Naive thymus-derived CD4-positive, alpha-beta T cell (primary cell): ENCODE measurements at regions of chr1 and their contacts with region 1.

Region 1: DNA sequence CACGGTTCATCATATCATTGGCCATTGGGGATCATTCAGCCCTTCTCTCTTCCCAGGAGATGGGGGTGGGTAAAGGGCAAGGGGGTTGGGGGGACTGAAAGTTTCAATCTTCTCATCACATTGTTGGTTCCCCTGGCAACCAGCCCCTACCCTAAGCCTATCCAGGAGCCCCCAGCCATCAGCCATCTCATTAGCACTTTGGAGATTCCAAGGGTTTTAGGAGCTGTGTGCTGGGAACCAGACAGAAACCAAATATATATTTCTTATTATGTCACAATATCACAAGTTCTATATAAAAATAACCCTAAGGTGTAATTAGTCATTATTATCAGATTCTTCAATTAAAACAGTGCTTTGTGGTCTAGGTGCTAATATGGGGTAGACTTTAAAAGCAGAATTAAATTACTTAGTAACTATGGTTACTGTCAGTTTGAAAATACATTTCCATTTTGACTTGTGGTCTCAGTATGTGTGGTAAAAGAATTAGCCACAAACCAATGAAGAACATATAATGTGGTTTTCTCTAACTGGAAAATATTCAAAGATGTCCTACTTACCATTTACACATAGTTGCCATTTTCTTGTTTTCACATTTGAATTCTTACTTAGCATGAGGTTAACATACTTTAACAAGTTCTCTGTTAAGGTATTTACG is 28.1 kb downstream of the IL23R start:
- DNase-seq: peak in 4 of 9 donors; percentile 19 to 49 (median 31)
- ATAC-seq: peak; percentile 73
- H3K4me3 ChIP-seq: no peak overlapping the region
- H3K4me3 Mint-ChIP-seq: peak overlapping the region in 2 of 10 donors; percentile 15 to 17
- H3K27ac ChIP-seq: no peak overlapping the region
- H3K27ac Mint-ChIP-seq: peak overlapping the region in 1 of 9 donors; percentile 75
- H3K4me1 ChIP-seq: peaks cover 4 to 20% of the 10 kb centered on the region in 2 donors
- H3K4me1 Mint-ChIP-seq: peaks cover 4 to 30% (median 12%) of the 10 kb centered on the region in 7 donors
- H3K27me3 ChIP-seq: no peaks in the 10 kb centered on the region
- H3K27me3 Mint-ChIP-seq: peaks cover 0 to 3% (median 0%) of the 10 kb centered on the region in 5 donors

Region 2: GRCh38 chr1:67162957-67163356 is 31.4 kb before region 1 on chr1:
- CTCF ChIA-PET with region 1: no interaction called
- POLR2A ChIA-PET with region 1: no interaction called
- intact Hi-C with region 1: loop called in 1 of 2 experiments (anchors 5 kb)
- DNase-seq: peak in 1 of 9 donors; percentile 43
- ATAC-seq: no peak
- H3K4me3 ChIP-seq: no peak overlapping the region
- H3K4me3 Mint-ChIP-seq: peak overlapping the region in 1 of 10 donors; percentile 45
- H3K27ac ChIP-seq: no peak overlapping the region
- H3K27ac Mint-ChIP-seq: peak overlapping the region in 1 of 9 donors; percentile 83
- H3K4me1 ChIP-seq: no peaks in the 10 kb centered on the region
- H3K4me1 Mint-ChIP-seq: peaks cover 7 to 46% (median 10%) of the 10 kb centered on the region in 7 donors
- H3K27me3 ChIP-seq: no peaks in the 10 kb centered on the region
- H3K27me3 Mint-ChIP-seq: peaks cover 0 to 17% (median 5%) of the 10 kb centered on the region in 5 donors

Region 3: GRCh38 chr1:67404212-67404620 is 209.9 kb after region 1 on chr1:
- CTCF ChIA-PET with region 1: no interaction called
- POLR2A ChIA-PET with region 1: no interaction called
- intact Hi-C with region 1: no loop called
- DNase-seq: no peak
- ATAC-seq: no peak
- H3K4me3 ChIP-seq: no peak overlapping the region
- H3K4me3 Mint-ChIP-seq: no peak overlapping the region
- H3K27ac ChIP-seq: no peak overlapping the region
- H3K27ac Mint-ChIP-seq: peak overlapping the region in 3 of 9 donors; percentile 36 to 83 (median 38)
- H3K4me1 ChIP-seq: no peaks in the 10 kb centered on the region
- H3K4me1 Mint-ChIP-seq: peaks cover 0 to 20% (median 7%) of the 10 kb centered on the region in 7 donors
- H3K27me3 ChIP-seq: no peaks in the 10 kb centered on the region
- H3K27me3 Mint-ChIP-seq: no peaks in the 10 kb centered on the region